Naive thymus-derived CD4-positive, alpha-beta T cell (primary cell): ENCODE measurements at regions of chr7 and their contacts with region 1.

Region 1: DNA sequence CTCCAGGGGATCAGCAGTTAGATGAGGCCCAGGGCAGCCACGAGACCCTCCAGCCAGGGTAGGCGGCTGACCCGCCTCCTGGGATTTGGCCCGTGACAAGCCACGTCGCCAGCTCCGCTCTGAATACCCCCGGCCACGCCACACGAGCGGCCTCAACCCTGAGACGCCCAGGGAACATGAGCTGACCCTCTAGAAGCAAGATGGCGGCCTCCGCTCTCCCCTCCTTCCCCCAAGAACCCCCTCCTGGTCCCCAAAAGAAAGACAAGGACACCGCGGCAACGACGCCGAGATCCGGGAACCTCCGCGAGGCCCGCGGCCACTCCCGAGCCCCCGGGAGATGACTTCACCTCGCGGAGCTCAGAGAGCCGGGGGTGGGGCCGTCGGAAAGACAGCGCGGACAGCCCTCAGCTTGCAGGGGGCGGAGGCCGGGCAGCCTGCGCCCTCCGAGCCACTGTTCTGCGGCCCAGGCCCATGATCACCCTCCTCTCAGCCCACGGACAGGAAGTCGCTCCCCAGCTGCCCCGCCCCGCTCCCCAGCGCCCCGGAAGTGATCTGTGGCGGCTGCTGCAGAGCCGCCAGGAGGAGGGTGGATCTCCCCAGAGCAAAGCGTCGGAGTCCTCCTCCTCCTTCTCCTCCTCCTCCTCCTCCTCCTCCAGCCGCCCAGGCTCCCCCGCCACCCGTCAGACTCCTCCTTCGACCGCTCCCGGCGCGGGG is at the start of gene RALA:
- DNase-seq: peak; percentile 78 to 90 (median 86)
- ATAC-seq: peak; percentile 96
- H3K4me3 ChIP-seq: peak within 1 kb of the TSS; percentile 77
- H3K4me3 Mint-ChIP-seq: peak within 1 kb of the TSS; percentile 88 to 98 (median 94)
- H3K27ac ChIP-seq: peak within 1 kb of the TSS; percentile 82
- H3K27ac Mint-ChIP-seq: peak within 1 kb of the TSS; percentile 91 to 98 (median 97)
- H3K4me1 ChIP-seq: peaks cover 22 to 26% of the 10 kb centered on the region in 2 donors
- H3K4me1 Mint-ChIP-seq: peaks cover 39 to 55% (median 52%) of the 10 kb centered on the region in 7 donors
- H3K27me3 ChIP-seq: no peaks in the 10 kb centered on the region
- H3K27me3 Mint-ChIP-seq: peaks cover 0 to 6% (median 0%) of the 10 kb centered on the region in 5 donors
- total RNA-seq, gene RALA: 24.8 to 48.2 (median 32.8) TPM

Region 2: DNA sequence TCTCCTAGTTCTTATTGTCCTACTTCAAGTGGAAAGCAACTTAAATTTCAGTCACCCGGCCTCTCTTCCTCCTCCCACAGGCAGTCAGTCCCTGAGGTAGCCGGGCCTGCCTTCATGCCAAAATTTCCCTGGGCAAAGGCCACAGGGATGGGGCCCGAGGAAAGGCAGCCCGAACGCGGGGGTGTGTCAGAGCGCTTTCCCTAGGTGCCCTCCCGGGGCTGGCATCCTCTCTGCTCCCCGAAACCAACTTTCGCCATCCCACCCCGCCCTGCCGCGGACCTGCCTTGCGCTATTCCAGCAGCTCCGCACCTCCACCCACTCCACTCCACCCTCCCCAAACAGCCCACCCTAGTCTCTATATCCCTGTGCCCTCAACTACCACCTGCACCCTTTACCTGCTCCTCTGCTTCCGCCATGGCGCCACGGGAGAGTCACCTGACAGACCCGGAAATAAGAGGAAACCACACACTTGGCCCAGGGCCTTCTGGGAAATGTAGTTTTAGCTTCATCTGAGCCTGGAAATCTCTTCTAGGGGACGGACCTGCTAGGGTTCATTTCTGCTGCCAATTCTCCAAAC is 714.3 kb before region 1 on chr7 and contains the start of gene VPS41:
- CTCF ChIA-PET with region 1: no interaction called
- POLR2A ChIA-PET with region 1: no interaction called
- intact Hi-C with region 1: loop called (anchors 5 to 10 kb)
- DNase-seq: peak; percentile 42 to 89 (median 85)
- ATAC-seq: peak; percentile 99
- H3K4me3 ChIP-seq: peak within 1 kb of the TSS; percentile 79
- H3K4me3 Mint-ChIP-seq: peak within 1 kb of the TSS; percentile 92 to 99 (median 97)
- H3K27ac ChIP-seq: peak within 1 kb of the TSS; percentile 72
- H3K27ac Mint-ChIP-seq: peak within 1 kb of the TSS; percentile 82 to 97 (median 91)
- H3K4me1 ChIP-seq: peaks cover 3 to 7% of the 10 kb centered on the region in 2 donors
- H3K4me1 Mint-ChIP-seq: peaks cover 17 to 41% (median 37%) of the 10 kb centered on the region in 7 donors
- H3K27me3 ChIP-seq: no peaks in the 10 kb centered on the region
- H3K27me3 Mint-ChIP-seq: peaks cover 0 to 5% (median 0%) of the 10 kb centered on the region in 5 donors
- total RNA-seq, gene VPS41: 37.1 to 65.0 (median 64.5) TPM

Region 3: GRCh38 chr7:39589323-39590111 is 33.7 kb before region 1 on chr7:
- CTCF ChIA-PET with region 1: interaction called, 4 read pairs
- POLR2A ChIA-PET with region 1: interaction called, 22 read pairs
- intact Hi-C with region 1: loop called (anchors 1 to 2 kb)
- DNase-seq: peak in 8 of 9 donors; percentile 37 to 85 (median 60)
- ATAC-seq: peak; percentile 94
- H3K4me3 ChIP-seq: no peak overlapping the region
- H3K4me3 Mint-ChIP-seq: peak overlapping the region in 6 of 10 donors; percentile 19 to 78 (median 52)
- H3K27ac ChIP-seq: no peak overlapping the region
- H3K27ac Mint-ChIP-seq: peak overlapping the region in 8 of 9 donors; percentile 55 to 90 (median 77)
- H3K4me1 ChIP-seq: peaks cover 5 to 15% of the 10 kb centered on the region in 2 donors
- H3K4me1 Mint-ChIP-seq: peaks cover 10 to 54% (median 26%) of the 10 kb centered on the region in 7 donors
- H3K27me3 ChIP-seq: no peaks in the 10 kb centered on the region
- H3K27me3 Mint-ChIP-seq: no peaks in the 10 kb centered on the region

Region 4: GRCh38 chr7:39644170-39644569 is 21.0 kb after region 1 on chr7:
- CTCF ChIA-PET with region 1: no interaction called
- POLR2A ChIA-PET with region 1: interaction called, 3 read pairs
- intact Hi-C with region 1: loop called in 1 of 2 experiments (anchors 2 kb)
- DNase-seq: no peak
- ATAC-seq: no peak
- H3K4me3 ChIP-seq: no peak overlapping the region
- H3K4me3 Mint-ChIP-seq: no peak overlapping the region
- H3K27ac ChIP-seq: no peak overlapping the region
- H3K27ac Mint-ChIP-seq: peak overlapping the region in 1 of 9 donors; percentile 41
- H3K4me1 ChIP-seq: peaks cover 0 to 8% of the 10 kb centered on the region in 2 donors
- H3K4me1 Mint-ChIP-seq: peaks cover 20 to 92% (median 86%) of the 10 kb centered on the region in 7 donors
- H3K27me3 ChIP-seq: no peaks in the 10 kb centered on the region
- H3K27me3 Mint-ChIP-seq: no peaks in the 10 kb centered on the region

Region 5: GRCh38 chr7:39746103-39746819 is 123.1 kb after region 1 on chr7:
- CTCF ChIA-PET with region 1: interaction called, 5 read pairs
- POLR2A ChIA-PET with region 1: no interaction called
- intact Hi-C with region 1: loop called in 1 of 2 experiments (anchors 1 kb)
- DNase-seq: peak; percentile 17 to 61 (median 45)
- ATAC-seq: peak; percentile 60
- H3K4me3 ChIP-seq: no peak overlapping the region
- H3K4me3 Mint-ChIP-seq: peak overlapping the region in 1 of 10 donors; percentile 1
- H3K27ac ChIP-seq: no peak overlapping the region
- H3K27ac Mint-ChIP-seq: peak overlapping the region in 6 of 9 donors; percentile 0 to 77 (median 24)
- H3K4me1 ChIP-seq: no peaks in the 10 kb centered on the region
- H3K4me1 Mint-ChIP-seq: peaks cover 0 to 8% (median 6%) of the 10 kb centered on the region in 7 donors
- H3K27me3 ChIP-seq: no peaks in the 10 kb centered on the region
- H3K27me3 Mint-ChIP-seq: no peaks in the 10 kb centered on the region